ENCODE measurements at regions of chr14 and their contacts with region 1.

Region 1: GRCh38 chr14:38867561-38868150 is 235.4 kb downstream of the SEC23A start:
- DNase-seq: peak; percentile 84

Region 2: GRCh38 chr14:37985826-37986470 is 881.7 kb before region 1 on chr14:
- intact Hi-C with region 1: loop called (anchors 5 kb)
- DNase-seq: no peak

Region 3: DNA sequence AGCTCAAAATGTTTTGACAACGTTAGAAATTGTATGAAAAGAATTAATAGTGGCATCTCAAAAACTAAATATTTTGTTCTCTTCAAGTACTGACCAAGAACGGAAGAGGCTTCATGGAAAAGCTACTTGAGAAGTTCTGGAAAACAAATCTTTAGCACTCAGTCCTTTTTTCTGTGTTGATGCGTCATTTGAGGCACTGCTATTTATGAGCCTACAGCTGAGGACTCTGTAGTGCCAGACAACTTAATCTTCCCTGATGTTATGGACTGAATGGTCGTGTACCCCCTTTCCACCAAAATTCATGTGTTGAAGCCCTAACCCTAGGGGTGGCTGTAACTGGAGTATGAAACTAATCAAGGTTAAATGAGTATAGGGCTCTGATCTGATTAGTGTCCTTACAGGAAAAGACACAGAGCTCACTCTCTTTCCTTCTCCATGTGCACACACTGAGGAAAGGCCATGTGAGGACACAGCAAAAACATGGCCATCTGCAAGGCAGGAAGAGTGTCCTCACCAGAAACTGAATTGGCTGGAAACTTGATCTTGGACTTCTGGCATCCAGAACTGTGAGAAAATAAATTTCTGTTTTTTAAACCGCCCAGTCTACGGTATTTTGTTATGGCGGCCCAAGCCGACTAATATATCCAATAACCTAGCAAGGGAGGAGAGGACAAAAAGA is 274.8 kb before region 1 on chr14:
- intact Hi-C with region 1: no loop called
- DNase-seq: no peak

Region 4: GRCh38 chr14:38721822-38722431 is 145.7 kb before region 1 on chr14:
- intact Hi-C with region 1: loop called (anchors 5 kb)
- DNase-seq: no peak

Region 5: DNA sequence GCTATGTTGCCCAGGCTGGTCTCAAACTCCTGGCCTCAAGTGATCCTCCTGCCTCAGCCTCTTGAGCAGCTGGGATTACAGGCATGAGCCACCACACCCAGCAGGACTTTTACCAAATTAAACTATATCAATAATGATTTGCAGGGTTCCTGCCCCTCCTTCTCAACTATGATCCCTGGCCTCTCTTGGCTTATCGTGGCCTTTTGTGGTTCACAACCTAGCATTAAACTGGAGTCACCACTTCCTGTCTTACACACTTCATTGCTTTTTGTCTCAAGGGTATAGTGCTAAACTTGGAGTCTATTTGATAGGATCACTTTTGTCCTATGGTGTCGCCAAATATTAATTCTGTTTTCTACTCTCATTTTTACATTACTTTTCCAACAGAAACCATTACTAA is 170.9 kb after region 1 on chr14:
- intact Hi-C with region 1: no loop called
- DNase-seq: no peak

Region 6: DNA sequence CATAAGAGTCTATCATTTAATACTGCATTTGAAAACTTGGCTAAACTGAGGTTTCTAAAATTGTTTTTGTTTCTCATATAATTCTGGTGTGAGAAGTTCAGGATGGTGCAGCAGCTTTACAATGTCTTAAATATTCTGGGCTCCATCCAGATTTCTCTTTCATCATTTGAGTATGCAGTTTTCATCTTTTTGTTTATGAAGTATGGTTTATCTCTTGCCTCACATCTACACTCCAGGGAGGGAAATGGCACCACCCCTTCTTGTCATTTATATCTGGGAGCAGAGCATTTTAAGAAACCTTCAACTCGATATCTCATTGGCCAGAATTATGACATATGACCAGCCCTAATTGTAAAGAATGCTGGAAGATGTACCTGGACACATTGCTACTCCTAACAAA is 270.8 kb after region 1 on chr14:
- intact Hi-C with region 1: no loop called
- DNase-seq: no peak